ENCODE measurements at regions of chr11 and their contacts with region 1.

Region 1: DNA sequence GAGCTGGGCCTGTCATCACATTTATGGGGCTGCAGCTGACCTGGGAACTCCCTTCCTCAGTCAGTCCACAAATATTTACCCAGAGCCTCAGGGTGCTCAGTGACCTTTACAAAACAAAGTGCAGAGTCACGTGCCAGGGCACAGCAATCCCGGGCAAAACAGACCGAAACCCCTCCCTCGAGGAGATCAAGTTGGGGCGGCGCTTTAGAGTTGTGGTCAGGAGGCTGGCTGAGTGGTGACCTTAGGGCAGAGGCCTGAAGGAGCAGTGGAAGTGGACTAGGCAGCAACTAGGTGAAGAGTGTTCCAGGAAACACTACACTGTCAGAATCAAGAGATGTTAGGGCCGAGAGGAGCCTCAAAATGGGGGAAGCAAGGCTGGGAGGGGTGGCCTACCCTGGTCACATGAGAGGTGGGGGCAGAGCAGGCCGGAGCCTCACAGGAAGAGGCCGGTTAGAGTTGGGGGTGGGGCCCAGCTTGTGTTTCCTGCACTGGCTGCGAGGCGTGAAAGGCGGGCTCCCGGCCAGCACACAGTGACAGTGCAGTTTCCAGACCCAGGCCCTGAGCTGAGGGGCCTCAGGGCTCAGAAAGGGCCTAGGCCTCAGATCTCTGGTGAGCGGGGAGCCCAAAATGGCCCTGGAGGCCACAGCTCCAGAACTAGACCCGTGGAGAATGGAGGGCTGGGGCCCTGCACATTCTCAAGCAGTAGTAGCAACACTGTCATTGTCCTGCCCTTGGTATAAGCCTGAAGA is 3.7 kb upstream of the NEAT1 start:
- DNase-seq: peak; percentile 33 to 89 (median 48)
- ATAC-seq: peak; percentile 51
- H3K4me3 ChIP-seq: peak overlapping the region; percentile 82
- H3K4me3 Mint-ChIP-seq: peak overlapping the region; percentile 92 to 100 (median 97)
- H3K27ac ChIP-seq: peak overlapping the region; percentile 98
- H3K27ac Mint-ChIP-seq: peak overlapping the region; percentile 97 to 100 (median 99)
- H3K4me1 ChIP-seq: peaks cover 36 to 46% of the 10 kb centered on the region in 2 donors
- H3K4me1 Mint-ChIP-seq: peaks cover 36 to 65% (median 45%) of the 10 kb centered on the region in 7 donors
- H3K27me3 ChIP-seq: no peaks in the 10 kb centered on the region
- H3K27me3 Mint-ChIP-seq: peaks cover 0 to 15% (median 0%) of the 10 kb centered on the region in 5 donors

Region 2: DNA sequence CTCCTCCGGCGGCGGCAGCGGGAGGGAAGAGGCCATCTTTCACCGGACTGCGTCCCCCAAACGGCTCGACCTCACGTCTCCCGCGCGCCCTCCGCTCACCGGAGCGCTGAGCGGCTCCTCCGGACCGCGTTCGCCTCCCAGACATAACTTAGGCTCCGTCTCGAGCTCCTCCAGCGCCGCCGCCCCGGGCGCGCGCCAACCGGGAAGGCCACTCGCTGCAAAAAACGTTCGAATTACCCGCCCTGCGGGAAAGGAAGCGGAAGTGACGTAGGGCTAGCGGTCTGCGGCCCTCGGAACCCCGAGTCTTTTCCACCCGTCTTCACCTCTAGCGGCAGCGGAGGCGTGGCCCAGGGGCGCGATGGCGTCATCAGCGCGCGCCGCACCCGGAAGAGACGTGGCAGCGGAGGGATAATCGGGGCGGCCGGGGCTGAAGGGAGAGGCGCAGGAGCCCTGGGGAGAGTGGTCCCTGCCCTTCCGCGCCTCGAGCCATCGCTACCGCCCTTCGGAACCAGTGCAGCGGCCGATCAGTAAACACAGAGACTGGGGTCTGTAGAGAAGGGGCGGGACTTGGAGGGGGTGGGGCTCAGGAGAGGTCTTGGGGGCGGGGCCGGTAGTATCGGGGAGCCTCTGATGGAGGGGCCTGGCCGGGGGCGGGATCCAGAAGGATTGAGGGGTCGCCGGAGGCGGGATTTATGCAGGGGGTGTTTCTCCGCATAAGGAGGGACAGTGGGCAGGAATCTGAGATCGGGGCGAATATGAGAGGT is 334.9 kb before region 1 on chr11 and contains the starts of genes CDCA5 and ZFPL1:
- CTCF ChIA-PET with region 1: no interaction called
- POLR2A ChIA-PET with region 1: no interaction called
- intact Hi-C with region 1: no loop called
- DNase-seq: peak; percentile 94 to 98 (median 97)
- ATAC-seq: peak; percentile 96
- H3K4me3 ChIP-seq: peak within 1 kb of the TSS; percentile 61
- H3K4me3 Mint-ChIP-seq: peak within 1 kb of the TSS; percentile 88 to 99 (median 93)
- H3K27ac ChIP-seq: peak within 1 kb of the TSS; percentile 86
- H3K27ac Mint-ChIP-seq: peak within 1 kb of the TSS; percentile 94 to 99 (median 97)
- H3K4me1 ChIP-seq: peaks cover 13 to 14% of the 10 kb centered on the region in 2 donors
- H3K4me1 Mint-ChIP-seq: peaks cover 20 to 49% (median 27%) of the 10 kb centered on the region in 7 donors
- H3K27me3 ChIP-seq: no peaks in the 10 kb centered on the region
- H3K27me3 Mint-ChIP-seq: peaks cover 0 to 4% (median 0%) of the 10 kb centered on the region in 5 donors
- total RNA-seq, gene CDCA5: 0.56 to 68.1 (median 0.81) TPM
- total RNA-seq, gene ZFPL1: 29.9 to 53.0 (median 49.3) TPM

Region 3: DNA sequence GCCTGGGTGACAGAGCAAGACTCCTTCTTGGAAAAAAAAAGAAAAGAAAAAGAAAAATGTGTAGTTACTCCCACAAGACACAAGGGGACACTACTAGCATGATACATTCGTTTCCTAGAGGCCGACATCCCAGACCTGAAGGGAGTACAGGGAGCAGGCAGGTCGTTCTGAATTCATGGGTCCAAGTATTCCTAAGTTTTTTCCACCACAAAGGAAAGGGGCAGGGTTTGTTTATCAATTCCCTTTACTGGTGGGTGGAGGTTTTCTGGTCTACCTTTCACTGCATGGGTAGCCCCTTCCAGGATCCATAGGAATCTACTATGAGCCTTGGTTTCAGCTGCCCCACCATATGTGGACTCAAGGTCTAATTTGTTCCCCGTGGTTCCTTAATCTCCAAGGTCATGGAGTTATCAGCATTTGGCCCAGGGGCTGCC is 52.5 kb before region 1 on chr11:
- CTCF ChIA-PET with region 1: interaction called, 4 read pairs
- POLR2A ChIA-PET with region 1: interaction called, 4 read pairs
- intact Hi-C with region 1: loop called (anchors 1 to 5 kb)
- DNase-seq: peak in 7 of 9 donors; percentile 47 to 71 (median 59)
- ATAC-seq: peak; percentile 82
- H3K4me3 ChIP-seq: no peak overlapping the region
- H3K4me3 Mint-ChIP-seq: no peak overlapping the region
- H3K27ac ChIP-seq: no peak overlapping the region
- H3K27ac Mint-ChIP-seq: no peak overlapping the region
- H3K4me1 ChIP-seq: no peaks in the 10 kb centered on the region
- H3K4me1 Mint-ChIP-seq: peaks cover 0 to 9% (median 0%) of the 10 kb centered on the region in 7 donors
- H3K27me3 ChIP-seq: no peaks in the 10 kb centered on the region
- H3K27me3 Mint-ChIP-seq: no peaks in the 10 kb centered on the region

Region 4: DNA sequence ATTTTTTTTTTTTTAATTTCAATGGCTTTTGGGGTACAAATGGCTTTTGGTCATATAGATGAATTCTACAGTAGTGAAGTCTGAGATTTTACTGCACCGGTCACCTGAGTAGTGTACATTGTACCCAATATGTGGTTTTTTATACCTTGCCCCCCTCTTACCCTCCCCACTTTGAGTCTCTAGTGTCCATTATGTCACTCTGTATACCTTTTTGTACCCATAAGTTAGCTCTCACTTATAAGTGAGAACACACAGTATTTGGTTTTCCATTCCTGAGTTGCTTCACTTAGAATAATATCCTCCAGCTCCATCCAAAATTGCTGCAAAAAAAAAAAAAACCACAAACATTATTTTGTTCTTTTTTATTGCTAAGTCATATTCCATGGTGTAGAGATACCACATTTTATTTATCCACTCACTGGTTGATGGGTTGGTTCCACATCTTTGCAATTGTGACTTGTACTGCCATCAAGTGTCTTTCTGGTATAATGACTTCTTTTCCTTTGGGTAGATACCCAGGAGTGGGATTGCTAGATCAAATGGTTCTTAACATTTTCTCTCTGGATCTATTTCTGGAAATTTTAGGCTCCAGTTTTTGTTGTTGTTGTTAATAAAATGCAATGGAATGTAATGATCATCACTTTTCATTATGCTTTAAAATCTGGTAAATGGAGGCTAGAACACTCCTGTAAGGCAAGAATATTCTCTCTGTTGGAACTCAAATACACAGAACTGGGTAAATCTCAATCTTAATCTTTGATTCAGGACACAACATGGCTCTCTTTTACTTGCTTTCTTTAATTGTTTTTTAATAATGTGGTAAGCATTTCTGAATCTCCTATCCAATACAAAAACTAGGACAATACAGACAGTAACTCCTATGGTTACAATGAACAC is 14.0 kb after region 1 on chr11:
- CTCF ChIA-PET with region 1: interaction called, 42 read pairs
- POLR2A ChIA-PET with region 1: interaction called, 351 read pairs
- intact Hi-C with region 1: loop called (anchors 1 kb)
- DNase-seq: peak in 7 of 9 donors; percentile 49 to 76 (median 62)
- ATAC-seq: peak; percentile 36
- H3K4me3 ChIP-seq: no peak overlapping the region
- H3K4me3 Mint-ChIP-seq: peak overlapping the region in 6 of 10 donors; percentile 25 to 94 (median 48)
- H3K27ac ChIP-seq: no peak overlapping the region
- H3K27ac Mint-ChIP-seq: peak overlapping the region; percentile 69 to 100 (median 87)
- H3K4me1 ChIP-seq: peaks cover 47 to 51% of the 10 kb centered on the region in 2 donors
- H3K4me1 Mint-ChIP-seq: peaks cover 55 to 89% (median 81%) of the 10 kb centered on the region in 7 donors
- H3K27me3 ChIP-seq: no peaks in the 10 kb centered on the region
- H3K27me3 Mint-ChIP-seq: no peaks in the 10 kb centered on the region

Region 5: DNA sequence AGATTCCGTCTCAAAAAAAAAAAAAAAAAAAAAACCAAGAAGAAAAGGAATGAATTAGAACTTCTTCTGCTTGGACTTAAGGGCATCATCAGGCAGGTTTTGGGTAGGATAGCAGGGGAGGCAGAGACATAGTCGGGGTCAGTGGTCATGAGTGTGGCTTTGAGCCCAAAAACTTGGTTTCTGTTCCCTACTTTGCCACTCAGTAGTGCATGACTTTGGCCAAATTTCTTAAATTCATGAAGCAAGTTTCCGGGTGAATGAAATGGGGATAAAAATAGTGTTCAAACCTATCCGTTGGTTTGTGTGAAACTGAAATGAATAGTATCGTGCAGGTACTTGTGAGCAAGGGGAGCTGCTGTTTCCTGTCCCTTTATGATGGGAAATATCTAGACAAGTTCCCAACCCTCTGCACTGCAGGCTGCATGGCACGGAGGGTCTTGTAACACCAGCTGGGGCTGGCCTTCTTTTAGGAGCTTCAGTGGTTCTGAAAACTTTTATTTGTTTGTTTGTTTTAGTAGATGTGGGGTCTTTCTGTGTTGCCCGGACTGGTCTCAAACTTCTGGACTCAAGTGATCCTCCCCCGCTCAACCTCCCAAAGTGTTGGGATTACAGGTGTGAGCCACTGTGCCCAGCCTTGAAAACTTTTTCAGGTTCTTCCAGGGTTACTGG is 22.1 kb after region 1 on chr11:
- CTCF ChIA-PET with region 1: interaction called, 8 read pairs
- POLR2A ChIA-PET with region 1: interaction called, 119 read pairs
- intact Hi-C with region 1: no loop called
- DNase-seq: peak in 1 of 9 donors; percentile 12
- ATAC-seq: peak; percentile 45
- H3K4me3 ChIP-seq: no peak overlapping the region
- H3K4me3 Mint-ChIP-seq: peak overlapping the region in 8 of 10 donors; percentile 29 to 71 (median 43)
- H3K27ac ChIP-seq: peak overlapping the region; percentile 3
- H3K27ac Mint-ChIP-seq: peak overlapping the region in 8 of 9 donors; percentile 64 to 90 (median 81)
- H3K4me1 ChIP-seq: peaks cover 0 to 12% of the 10 kb centered on the region in 2 donors
- H3K4me1 Mint-ChIP-seq: peaks cover 17 to 71% (median 53%) of the 10 kb centered on the region in 7 donors
- H3K27me3 ChIP-seq: no peaks in the 10 kb centered on the region
- H3K27me3 Mint-ChIP-seq: no peaks in the 10 kb centered on the region

Region 6: DNA sequence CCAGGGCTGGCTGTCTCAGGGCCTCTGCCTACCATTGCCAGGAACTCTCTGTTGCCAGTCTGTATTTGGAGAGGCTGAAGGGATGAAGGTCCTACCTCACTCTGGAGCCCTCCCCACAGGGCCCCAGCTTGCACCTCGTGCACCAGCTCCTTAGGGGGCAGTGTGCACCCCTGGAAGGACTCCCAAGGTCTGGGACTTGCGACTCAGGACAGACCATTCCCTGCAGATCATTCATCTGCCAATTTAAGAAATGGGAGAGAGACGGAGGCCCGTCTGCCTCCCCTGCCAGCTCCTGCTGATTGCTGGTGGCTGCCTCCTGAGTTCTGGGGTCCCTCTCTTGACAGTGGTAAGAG is 52.5 kb after region 1 on chr11:
- CTCF ChIA-PET with region 1: interaction called, 11 read pairs
- POLR2A ChIA-PET with region 1: interaction called, 168 read pairs
- intact Hi-C with region 1: loop called (anchors 1 kb)
- DNase-seq: peak in 2 of 9 donors; percentile 16 to 21
- ATAC-seq: peak; percentile 49
- H3K4me3 ChIP-seq: peak overlapping the region; percentile 15
- H3K4me3 Mint-ChIP-seq: peak overlapping the region in 9 of 10 donors; percentile 14 to 94 (median 84)
- H3K27ac ChIP-seq: peak overlapping the region; percentile 78
- H3K27ac Mint-ChIP-seq: peak overlapping the region; percentile 97 to 100 (median 98)
- H3K4me1 ChIP-seq: peaks cover 10 to 20% of the 10 kb centered on the region in 2 donors
- H3K4me1 Mint-ChIP-seq: peaks cover 6 to 37% (median 15%) of the 10 kb centered on the region in 7 donors
- H3K27me3 ChIP-seq: no peaks in the 10 kb centered on the region
- H3K27me3 Mint-ChIP-seq: no peaks in the 10 kb centered on the region

Region 7: DNA sequence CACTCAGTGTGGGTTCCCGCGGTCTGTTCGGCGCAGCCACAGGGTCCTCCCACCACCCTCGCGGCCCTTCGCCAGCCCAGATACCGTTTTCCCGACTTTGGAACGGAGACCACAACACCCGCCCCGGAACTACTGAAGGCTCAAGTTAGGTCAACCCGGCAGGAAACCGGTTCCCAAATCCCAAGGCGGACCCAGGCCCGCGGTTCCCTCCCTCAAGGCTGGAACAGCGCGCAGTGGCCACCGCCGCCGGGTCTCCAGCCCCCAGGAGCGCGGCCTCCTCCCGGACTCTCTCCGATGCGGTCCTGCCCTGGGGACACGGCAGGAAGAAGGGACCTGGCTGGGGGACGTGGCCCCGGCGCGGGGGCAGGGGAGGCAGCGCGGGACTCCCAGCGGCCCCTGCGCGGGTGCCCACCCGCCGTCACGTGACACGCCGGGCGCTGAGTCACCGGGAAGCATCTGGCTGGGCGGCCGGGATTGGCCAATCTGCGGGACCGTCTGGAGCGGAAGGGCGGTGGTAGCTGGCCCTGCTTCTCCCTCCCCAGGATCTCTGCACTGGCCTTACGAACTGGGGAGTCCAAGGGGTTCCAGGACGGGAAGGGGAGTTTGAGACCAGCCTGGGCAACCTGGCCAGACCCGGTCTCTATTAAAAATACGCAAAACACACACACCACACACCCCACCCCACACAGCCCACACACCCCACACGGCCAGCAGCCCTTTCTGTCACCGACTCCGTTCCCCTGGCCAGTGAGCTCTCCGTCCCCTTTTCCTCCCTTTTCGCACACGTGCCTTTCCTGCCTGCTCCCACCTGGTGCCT is 58.5 kb after region 1 on chr11:
- CTCF ChIA-PET with region 1: interaction called, 11 read pairs
- POLR2A ChIA-PET with region 1: interaction called, 168 read pairs
- intact Hi-C with region 1: loop called in 1 of 2 experiments (anchors 1 kb)
- DNase-seq: peak; percentile 69 to 96 (median 75)
- ATAC-seq: peak; percentile 94
- H3K4me3 ChIP-seq: peak overlapping the region; percentile 97
- H3K4me3 Mint-ChIP-seq: peak overlapping the region; percentile 87 to 100 (median 96)
- H3K27ac ChIP-seq: peak overlapping the region; percentile 96
- H3K27ac Mint-ChIP-seq: peak overlapping the region; percentile 94 to 100 (median 99)
- H3K4me1 ChIP-seq: peaks cover 6 to 17% of the 10 kb centered on the region in 2 donors
- H3K4me1 Mint-ChIP-seq: peaks cover 8 to 30% (median 14%) of the 10 kb centered on the region in 7 donors
- H3K27me3 ChIP-seq: no peaks in the 10 kb centered on the region
- H3K27me3 Mint-ChIP-seq: peaks cover 0 to 2% (median 0%) of the 10 kb centered on the region in 5 donors

Region 8: DNA sequence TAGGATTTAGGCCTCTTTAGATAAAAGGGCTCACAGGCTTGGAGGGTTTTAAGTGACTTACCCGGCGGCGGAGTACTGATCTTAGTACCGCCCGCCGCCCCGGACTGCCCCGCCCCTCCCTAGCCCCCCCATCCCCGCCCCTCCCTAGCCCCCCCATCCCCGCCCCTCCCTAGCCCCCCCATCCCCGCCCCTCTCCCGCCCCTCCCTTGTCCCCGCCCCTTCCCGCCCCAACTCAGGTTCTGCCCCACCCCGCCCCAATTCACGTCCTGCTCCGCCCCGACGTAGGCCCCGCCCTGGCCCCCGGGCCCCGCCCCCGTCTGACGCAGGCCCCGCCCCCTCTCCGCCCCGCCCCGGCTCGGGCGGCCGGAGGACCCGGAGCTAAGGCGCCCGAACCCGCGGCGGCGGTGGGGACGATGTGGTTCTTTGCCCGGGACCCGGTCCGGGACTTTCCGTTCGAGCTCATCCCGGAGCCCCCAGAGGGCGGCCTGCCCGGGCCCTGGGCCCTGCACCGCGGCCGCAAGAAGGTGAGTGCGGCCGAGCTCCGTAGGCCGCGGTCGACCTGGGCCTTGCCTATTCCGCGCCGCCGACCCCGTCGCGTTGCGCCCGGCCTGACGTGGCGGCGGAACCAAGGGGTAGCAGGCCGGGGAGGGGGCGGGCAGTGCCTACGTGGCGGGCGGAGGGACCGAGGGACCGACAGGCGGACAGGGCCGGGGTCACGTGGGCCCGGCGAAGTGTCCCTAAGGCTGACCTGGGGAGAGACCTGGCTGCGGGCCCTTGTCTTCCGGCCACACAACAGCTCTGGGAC is 106.1 kb after region 1 on chr11 and contains the start of gene SCYL1:
- CTCF ChIA-PET with region 1: interaction called, 3 read pairs
- POLR2A ChIA-PET with region 1: interaction called, 15 read pairs
- intact Hi-C with region 1: no loop called
- DNase-seq: peak; percentile 58 to 86 (median 77)
- ATAC-seq: peak; percentile 97
- H3K4me3 ChIP-seq: peak within 1 kb of the TSS; percentile 79
- H3K4me3 Mint-ChIP-seq: peak within 1 kb of the TSS; percentile 86 to 96 (median 90)
- H3K27ac ChIP-seq: peak within 1 kb of the TSS; percentile 96
- H3K27ac Mint-ChIP-seq: peak within 1 kb of the TSS; percentile 89 to 98 (median 95)
- H3K4me1 ChIP-seq: peaks cover 31 to 40% of the 10 kb centered on the region in 2 donors
- H3K4me1 Mint-ChIP-seq: peaks cover 32 to 66% (median 54%) of the 10 kb centered on the region in 7 donors
- H3K27me3 ChIP-seq: no peaks in the 10 kb centered on the region
- H3K27me3 Mint-ChIP-seq: no peaks in the 10 kb centered on the region
- total RNA-seq, gene SCYL1: 63.2 to 79.8 (median 70.4) TPM